ENCODE measurements at regions of chr2 and their contacts with region 1.

Region 1: GRCh38 chr2:224479826-224480225 is 77.9 kb upstream of the FAM124B start:
- DNase-seq: no peak
- H3K4me3 ChIP-seq: no peak overlapping the region
- H3K27ac ChIP-seq: no peak overlapping the region
- H3K4me1 ChIP-seq: peaks cover 2% of the 10 kb centered on the region
- H3K27me3 ChIP-seq: no peaks in the 10 kb centered on the region
- CTCF ChIP-seq: no peak

Region 2: GRCh38 chr2:224507789-224508188 is 28.0 kb after region 1 on chr2:
- CTCF ChIA-PET with region 1: no interaction called
- dilution Hi-C with region 1: no loop called
- in situ Hi-C with region 1: no loop called
- intact Hi-C with region 1: no loop called
- DNase-seq: no peak
- H3K4me3 ChIP-seq: no peak overlapping the region
- H3K27ac ChIP-seq: no peak overlapping the region
- H3K4me1 ChIP-seq: no peaks in the 10 kb centered on the region
- H3K27me3 ChIP-seq: no peaks in the 10 kb centered on the region
- CTCF ChIP-seq: no peak

Region 3: DNA sequence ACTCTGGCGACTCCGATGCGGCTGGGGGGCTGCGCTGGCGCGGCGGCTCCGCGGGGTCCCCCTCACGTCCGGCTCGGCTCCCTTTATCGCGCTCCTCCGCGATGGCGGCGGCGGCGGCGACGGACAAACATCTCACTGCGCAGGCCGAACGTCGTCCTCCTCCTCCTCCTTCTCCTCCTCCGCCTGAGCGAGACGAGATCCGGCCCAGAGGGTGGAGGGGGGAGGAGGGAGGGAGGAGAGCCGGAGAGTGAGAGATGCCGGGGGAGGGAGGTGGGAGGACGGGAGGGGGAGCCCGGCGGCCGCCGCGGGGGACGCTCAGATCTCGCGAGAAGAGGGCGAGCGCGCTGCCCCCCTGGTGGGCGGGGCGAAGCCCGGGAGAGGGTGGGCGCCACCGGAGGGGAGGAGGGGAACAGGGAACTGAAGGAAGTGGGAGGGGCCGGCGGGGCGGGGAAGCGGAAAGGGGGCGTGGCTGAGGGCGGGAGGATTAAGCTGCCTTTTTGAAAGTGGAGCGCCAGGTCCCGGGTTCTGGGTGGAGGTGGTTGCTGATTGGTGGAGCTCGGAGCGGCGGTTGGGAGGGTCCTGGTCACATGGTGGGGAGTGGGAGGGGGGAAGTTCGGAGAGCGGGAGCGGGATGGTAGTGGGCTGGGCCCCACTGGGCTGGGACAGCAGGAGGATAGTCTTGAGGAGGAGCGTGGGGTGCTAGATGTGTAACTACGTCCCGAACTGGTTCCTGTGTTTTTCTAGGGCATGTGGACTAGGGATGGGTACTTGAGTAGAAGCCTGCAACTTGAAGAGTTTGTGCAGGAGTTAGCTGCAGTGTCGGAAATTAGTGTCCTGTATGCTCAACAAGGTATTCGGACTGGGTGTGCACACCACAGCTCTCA is 105.6 kb after region 1 on chr2 and contains the start of gene CUL3:
- CTCF ChIA-PET with region 1: no interaction called
- dilution Hi-C with region 1: no loop called
- in situ Hi-C with region 1: no loop called
- intact Hi-C with region 1: loop called (anchors 1 kb)
- DNase-seq: peak; percentile 96
- H3K4me3 ChIP-seq: peak within 1 kb of the TSS; percentile 79 to 100 (median 93)
- H3K27ac ChIP-seq: peak within 1 kb of the TSS; percentile 75
- H3K4me1 ChIP-seq: peaks cover 10% of the 10 kb centered on the region
- H3K27me3 ChIP-seq: no peaks in the 10 kb centered on the region
- CTCF ChIP-seq: no peak
- total RNA-seq, gene CUL3: 45.0 to 62.9 TPM

Region 4: DNA sequence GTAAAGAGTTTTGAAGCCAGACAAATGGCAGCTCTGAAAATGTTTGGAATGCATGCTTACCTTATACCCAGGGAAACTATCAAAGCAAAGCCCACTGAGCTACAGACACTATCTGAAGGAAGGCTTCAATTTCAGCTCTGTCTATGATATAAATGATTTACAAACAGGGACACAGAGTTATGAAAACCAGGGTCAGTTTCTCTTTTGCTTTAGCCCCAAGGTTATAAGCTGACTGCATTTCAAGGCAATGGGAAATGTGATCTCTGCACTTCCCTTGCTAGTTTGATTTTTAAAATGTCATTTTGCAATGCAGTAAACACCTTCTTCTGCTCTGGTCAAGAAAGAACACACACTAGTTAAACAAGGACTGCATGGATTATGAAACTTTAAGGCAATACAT is 301.6 kb after region 1 on chr2:
- CTCF ChIA-PET with region 1: no interaction called
- dilution Hi-C with region 1: no loop called
- in situ Hi-C with region 1: no loop called
- intact Hi-C with region 1: no loop called
- DNase-seq: no peak
- H3K4me3 ChIP-seq: no peak overlapping the region
- H3K27ac ChIP-seq: no peak overlapping the region
- H3K4me1 ChIP-seq: no peaks in the 10 kb centered on the region
- H3K27me3 ChIP-seq: no peaks in the 10 kb centered on the region
- CTCF ChIP-seq: no peak